ENCODE measurements at regions of chr5 and their contacts with region 1.

Region 1: GRCh38 chr5:57650360-57651069 is 167.9 kb upstream of the ACTBL2 start:
- DNase-seq: no peak
- H3K4me3 ChIP-seq: no peak overlapping the region
- H3K27ac ChIP-seq: no peak overlapping the region
- H3K27me3 ChIP-seq: no peaks in the 10 kb centered on the region
- CTCF ChIP-seq: peak; percentile 56

Region 2: DNA sequence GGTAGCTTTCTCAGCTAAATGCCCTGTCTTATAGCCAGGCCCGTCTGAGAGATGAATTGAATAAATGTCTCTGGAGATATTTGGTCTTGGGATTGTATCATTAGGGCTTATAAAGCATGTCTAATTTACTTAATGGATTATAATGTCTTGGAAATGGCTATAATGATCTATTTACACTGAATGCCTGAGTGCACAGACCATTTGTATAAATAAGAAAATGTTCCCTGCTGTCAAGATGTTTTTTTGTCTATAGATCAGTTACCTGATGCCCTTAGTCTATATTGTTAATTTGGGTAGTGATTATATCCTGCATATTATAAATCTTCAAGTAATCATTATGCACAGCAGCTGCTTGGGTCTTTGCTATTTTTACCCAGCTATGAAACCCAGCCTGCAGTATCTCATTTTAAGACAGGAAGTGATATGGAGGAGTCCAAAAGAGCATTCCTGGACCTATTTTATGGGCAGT is 55.0 kb before region 1 on chr5:
- CTCF ChIA-PET with region 1: no interaction called
- POLR2A ChIA-PET with region 1: no interaction called
- DNase-seq: no peak
- H3K4me3 ChIP-seq: no peak overlapping the region
- H3K27ac ChIP-seq: no peak overlapping the region
- H3K27me3 ChIP-seq: no peaks in the 10 kb centered on the region
- CTCF ChIP-seq: no peak

Region 3: GRCh38 chr5:57635146-57635777 is 15.3 kb before region 1 on chr5:
- CTCF ChIA-PET with region 1: interaction called, 15 read pairs
- POLR2A ChIA-PET with region 1: no interaction called
- DNase-seq: no peak
- H3K4me3 ChIP-seq: no peak overlapping the region
- H3K27ac ChIP-seq: no peak overlapping the region
- H3K27me3 ChIP-seq: no peaks in the 10 kb centered on the region
- CTCF ChIP-seq: no peak